ENCODE measurements at regions of chr19 and their contacts with region 1.

Region 1: DNA sequence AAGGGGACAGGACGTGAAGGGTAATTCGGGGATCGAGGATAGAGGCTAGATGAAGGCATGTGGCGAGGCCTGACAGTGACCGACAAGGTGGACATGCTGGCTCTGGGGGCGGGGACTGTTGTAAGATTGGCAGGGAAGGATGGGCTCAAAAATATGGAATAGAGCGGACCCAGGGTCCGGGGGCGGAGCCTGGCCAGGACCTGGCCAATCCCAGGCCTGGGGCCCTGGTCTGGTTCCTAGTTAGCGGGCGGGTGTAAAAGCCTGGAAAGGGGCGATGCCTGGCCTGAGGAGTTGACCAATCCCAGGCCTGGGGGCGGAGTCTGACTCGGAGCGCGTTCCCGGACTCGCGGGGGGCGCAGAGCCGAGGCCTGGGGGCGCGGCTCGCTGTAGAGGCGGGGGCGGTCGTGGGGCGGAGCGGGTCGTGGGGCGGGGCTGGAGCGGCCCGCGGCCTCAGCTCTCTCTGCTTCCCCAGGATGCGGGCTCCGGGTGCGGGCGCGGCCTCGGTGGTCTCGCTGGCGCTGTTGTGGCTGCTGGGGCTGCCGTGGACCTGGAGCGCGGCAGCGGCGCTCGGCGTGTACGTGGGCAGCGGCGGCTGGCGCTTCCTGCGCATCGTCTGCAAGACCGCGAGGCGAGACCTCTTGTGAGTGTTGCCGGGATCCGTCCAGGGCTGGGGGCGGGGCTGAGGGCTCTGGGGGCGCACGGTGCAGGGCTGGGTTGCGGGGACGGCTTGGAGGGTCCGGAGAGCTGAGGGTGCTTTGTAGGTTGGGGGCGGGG is at the start of gene SLC27A1:
- DNase-seq: peak; percentile 100
- H3K4me3 ChIP-seq: peak within 1 kb of the TSS; percentile 57 to 71 (median 70)
- H3K27ac ChIP-seq: peak within 1 kb of the TSS; percentile 82 to 93 (median 83)
- H3K4me1 ChIP-seq: peaks cover 25 to 26% of the 10 kb centered on the region in 2 donors
- H3K27me3 ChIP-seq: no peaks in the 10 kb centered on the region
- CTCF ChIP-seq: no peak
- POLR2A ChIP-seq: no peak
- total RNA-seq, gene SLC27A1: 25.3 to 40.7 (median 28.1) TPM

Region 2: GRCh38 chr19:17346109-17346671 is 124.1 kb before region 1 on chr19:
- intact Hi-C with region 1: loop called (anchors 5 kb)
- DNase-seq: peak; percentile 60 to 68
- H3K4me3 ChIP-seq: no peak overlapping the region
- H3K27ac ChIP-seq: peak overlapping the region; percentile 35 to 65 (median 56)
- H3K4me1 ChIP-seq: peaks cover 0 to 20% of the 10 kb centered on the region in 2 donors
- H3K27me3 ChIP-seq: no peaks in the 10 kb centered on the region
- CTCF ChIP-seq: peak; percentile 80 to 96 (median 86)
- POLR2A ChIP-seq: no peak

Region 3: DNA sequence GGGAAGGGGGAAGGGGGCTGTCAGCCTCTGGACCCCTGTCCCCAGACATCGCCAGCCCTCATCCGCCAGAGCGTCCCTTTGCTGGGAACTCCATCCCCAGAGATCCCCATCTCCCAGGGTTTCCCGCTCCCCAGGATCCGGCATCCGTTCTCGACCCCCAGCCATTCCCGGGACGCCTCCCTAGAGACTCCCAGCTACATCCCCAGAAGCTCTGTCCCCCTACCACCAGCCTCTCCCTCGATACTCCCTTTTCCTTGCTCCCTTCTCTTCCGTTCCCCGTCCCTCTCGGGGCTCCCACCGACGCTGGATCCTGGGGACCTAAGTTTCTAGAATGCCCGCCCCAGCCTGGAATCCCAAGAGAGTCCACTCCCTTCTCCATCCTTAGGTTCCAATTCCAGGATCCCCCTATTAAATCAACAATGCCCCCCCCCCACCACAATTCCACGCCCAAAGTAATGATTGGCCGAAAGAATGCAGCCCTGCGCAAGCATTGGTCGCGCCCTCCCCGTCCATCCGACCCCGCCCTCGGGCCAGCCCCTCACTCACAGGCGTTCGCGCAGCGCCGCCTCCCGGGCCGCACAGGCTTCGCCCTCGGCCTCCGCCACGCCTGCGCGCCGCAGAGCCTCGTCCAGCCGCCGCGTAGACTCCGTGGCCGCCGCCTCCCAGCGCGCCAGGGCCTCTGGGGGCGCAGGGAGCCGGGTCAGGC is 79.4 kb before region 1 on chr19:
- intact Hi-C with region 1: loop called (anchors 10 kb)
- DNase-seq: peak; percentile 73 to 81
- H3K4me3 ChIP-seq: peak overlapping the region in 1 of 3 donors; percentile 32
- H3K27ac ChIP-seq: no peak overlapping the region
- H3K4me1 ChIP-seq: peaks cover 0 to 12% of the 10 kb centered on the region in 2 donors
- H3K27me3 ChIP-seq: peaks cover 3% of the 10 kb centered on the region
- CTCF ChIP-seq: peak in 4 of 6 experiments; percentile 19 to 69 (median 64)
- POLR2A ChIP-seq: no peak

Region 4: DNA sequence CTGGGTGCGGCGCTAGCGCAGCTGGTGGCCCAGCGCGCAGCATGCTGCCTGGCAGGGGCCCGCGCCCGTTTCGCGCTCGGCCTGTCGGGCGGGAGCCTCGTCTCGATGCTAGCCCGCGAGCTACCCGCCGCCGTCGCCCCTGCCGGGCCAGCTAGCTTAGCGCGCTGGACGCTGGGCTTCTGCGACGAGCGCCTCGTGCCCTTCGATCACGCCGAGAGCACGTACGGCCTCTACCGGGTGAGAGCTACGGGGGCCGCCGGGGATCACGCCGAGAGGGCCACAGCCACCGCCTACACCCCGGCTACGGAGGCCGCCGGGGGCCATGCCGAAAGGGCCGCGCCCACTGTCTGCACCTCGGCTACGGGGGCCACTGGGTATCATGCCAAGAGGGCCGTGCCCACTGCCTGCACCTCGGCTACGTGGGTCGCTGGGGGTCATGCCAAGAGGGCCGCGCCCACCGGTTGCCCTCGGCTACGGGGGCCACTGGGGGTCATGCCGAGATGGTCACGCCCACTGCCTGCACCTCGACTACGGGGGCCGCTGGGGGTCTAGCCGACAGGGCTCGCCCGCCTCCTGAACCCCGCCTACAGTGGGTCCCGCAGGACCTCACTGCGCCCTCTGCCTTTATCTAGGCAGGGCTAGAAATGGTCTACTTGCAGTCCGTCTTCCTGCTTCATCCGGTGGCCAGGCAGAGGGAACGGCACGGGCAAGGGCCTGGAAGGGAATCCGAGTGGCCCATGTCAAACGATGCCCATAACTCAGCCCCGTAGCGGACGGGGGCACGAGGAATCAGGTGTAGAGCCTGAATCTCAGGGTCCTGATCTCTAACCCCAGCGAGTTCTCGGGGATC is 41.7 kb after region 1 on chr19:
- intact Hi-C with region 1: loop called (anchors 5 kb)
- DNase-seq: peak; percentile 88 to 89
- H3K4me3 ChIP-seq: peak overlapping the region; percentile 47 to 99 (median 97)
- H3K27ac ChIP-seq: peak overlapping the region; percentile 97 to 99 (median 98)
- H3K4me1 ChIP-seq: peaks cover 13 to 15% of the 10 kb centered on the region in 2 donors
- H3K27me3 ChIP-seq: no peaks in the 10 kb centered on the region
- CTCF ChIP-seq: peak in 3 of 6 experiments; percentile 16 to 36 (median 22)
- POLR2A ChIP-seq: peak; percentile 6 to 21

Measured in thyroid gland (tissue), 4 donors.